ENCODE measurements at regions of chr12 and their contacts with region 1.

Region 1: DNA sequence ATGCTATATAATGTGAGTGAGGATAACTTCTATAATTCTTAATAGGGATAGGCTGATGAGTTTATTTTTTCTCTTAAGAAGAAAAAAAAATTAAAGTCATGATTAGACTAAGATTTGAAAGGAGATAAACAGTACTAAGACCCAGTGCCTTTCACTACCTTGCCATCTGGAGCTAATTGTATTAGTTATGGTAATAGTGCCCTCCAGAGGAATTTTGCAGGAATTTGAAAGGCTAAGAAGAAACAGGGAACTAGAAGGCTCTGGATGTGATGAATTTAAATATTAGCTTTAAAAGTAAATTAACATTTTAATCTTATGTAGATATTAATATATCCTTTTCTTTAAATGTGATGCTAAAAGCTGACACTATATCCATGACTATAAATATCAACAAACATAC is 36.6 kb upstream of the PIK3C2G start:
- DNase-seq: no peak
- H3K4me3 ChIP-seq: no peak overlapping the region
- H3K27ac ChIP-seq: no peak overlapping the region
- H3K4me1 ChIP-seq: no peaks in the 10 kb centered on the region
- H3K27me3 ChIP-seq: no peaks in the 10 kb centered on the region
- CTCF ChIP-seq: peak; percentile 36 to 41 (median 38)
- EP300 ChIP-seq: no peak
- POLR2A ChIP-seq: no peak

Region 2: GRCh38 chr12:18139989-18140596 is 84.7 kb before region 1 on chr12:
- intact Hi-C with region 1: loop called (anchors 10 kb)
- DNase-seq: no peak
- H3K4me3 ChIP-seq: no peak overlapping the region
- H3K27ac ChIP-seq: no peak overlapping the region
- H3K4me1 ChIP-seq: peaks cover 0 to 3% (median 0%) of the 10 kb centered on the region in 4 donors
- H3K27me3 ChIP-seq: no peaks in the 10 kb centered on the region
- CTCF ChIP-seq: peak; percentile 50 to 66 (median 62)
- EP300 ChIP-seq: no peak
- POLR2A ChIP-seq: no peak